ENCODE measurements at regions of chr16 and their contacts with region 1.

Region 1: GRCh38 chr16:21326459-21326858 is 48.4 kb upstream of the CRYM start:
- DNase-seq: no peak
- ATAC-seq: no peak
- H3K4me3 ChIP-seq: no peak overlapping the region
- H3K27ac ChIP-seq: no peak overlapping the region
- H3K4me1 ChIP-seq: no peaks in the 10 kb centered on the region
- H3K27me3 ChIP-seq: no peaks in the 10 kb centered on the region
- CTCF ChIP-seq: no peak
- POLR2A ChIP-seq: no peak
- RAD21 ChIP-seq: no peak

Region 2: DNA sequence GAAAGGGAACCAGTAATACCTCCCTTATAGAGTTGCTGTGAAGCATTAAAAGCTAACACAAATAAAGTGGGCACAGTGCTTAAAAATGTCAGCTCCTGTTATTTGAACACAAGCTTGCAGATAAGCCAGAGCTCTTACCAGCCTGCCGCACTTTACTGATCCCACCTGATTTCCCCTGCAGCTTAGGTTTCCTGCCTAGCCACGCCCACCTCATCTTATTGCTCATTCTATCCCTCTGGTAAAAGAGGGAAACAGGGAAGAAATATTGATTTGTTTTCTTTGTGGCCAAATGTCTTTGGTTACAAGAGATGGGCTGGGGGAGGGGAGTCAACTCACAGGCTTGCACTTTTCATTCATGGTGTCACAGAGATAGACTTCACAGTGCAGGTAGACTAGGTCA is 989.5 kb before region 1 on chr16:
- CTCF ChIA-PET with region 1: no interaction called
- POLR2A ChIA-PET with region 1: no interaction called
- dilution Hi-C with region 1: no loop called
- in situ Hi-C with region 1: no loop called
- intact Hi-C with region 1: no loop called
- DNase-seq: no peak
- ATAC-seq: no peak
- H3K4me3 ChIP-seq: no peak overlapping the region
- H3K27ac ChIP-seq: no peak overlapping the region
- H3K4me1 ChIP-seq: no peaks in the 10 kb centered on the region
- H3K27me3 ChIP-seq: no peaks in the 10 kb centered on the region
- CTCF ChIP-seq: no peak
- POLR2A ChIP-seq: no peak
- RAD21 ChIP-seq: no peak

Region 3: DNA sequence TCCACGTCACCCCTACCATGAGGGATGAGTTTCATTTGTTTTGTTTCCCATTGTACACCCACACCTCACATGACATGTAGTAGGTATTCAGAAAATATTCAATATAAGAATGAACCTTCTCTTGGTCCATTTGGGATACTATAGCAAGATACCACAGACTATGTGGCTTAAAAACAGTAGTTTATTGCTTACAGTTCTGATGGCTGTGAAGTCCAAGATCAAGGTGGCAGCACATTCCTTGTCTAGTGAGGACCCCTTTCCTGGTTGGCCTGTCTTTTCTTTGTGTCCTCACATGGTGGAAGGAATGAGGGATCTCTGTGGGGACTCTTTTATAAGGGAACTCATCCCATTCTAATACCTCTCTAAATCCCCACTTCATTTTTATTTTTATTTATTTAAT is 12.1 kb before region 1 on chr16:
- CTCF ChIA-PET with region 1: no interaction called
- POLR2A ChIA-PET with region 1: interaction called, 13 read pairs
- dilution Hi-C with region 1: no loop called
- in situ Hi-C with region 1: no loop called
- intact Hi-C with region 1: no loop called
- DNase-seq: no peak
- ATAC-seq: no peak
- H3K4me3 ChIP-seq: no peak overlapping the region
- H3K27ac ChIP-seq: no peak overlapping the region
- H3K4me1 ChIP-seq: no peaks in the 10 kb centered on the region
- H3K27me3 ChIP-seq: no peaks in the 10 kb centered on the region
- CTCF ChIP-seq: no peak
- POLR2A ChIP-seq: no peak
- RAD21 ChIP-seq: no peak

Measured in IMR-90 (cell line).